Activated T-helper 2 cell treated with anti-CD3 and anti-CD28 coated beads, Interferon-gamma antibody, Interleukin-2, Interleukin-4, amounts not matched to agents 10 μg/mL and 5 μg/mL and 100 μg/mL, durations not matched to agents 14 hours and 24 hours and 36 hours (primary cell): ENCODE measurements at regions of chr4 and their contacts with region 1.

Region 1: GRCh38 chr4:168917138-168917779 is 92.8 kb downstream of the CBR4 start:
- DNase-seq: no peak
- H3K4me3 Mint-ChIP-seq: no peak overlapping the region
- H3K27ac Mint-ChIP-seq: no peak overlapping the region
- H3K4me1 Mint-ChIP-seq: no peaks in the 10 kb centered on the region
- H3K27me3 Mint-ChIP-seq: no peaks in the 10 kb centered on the region

Region 2: DNA sequence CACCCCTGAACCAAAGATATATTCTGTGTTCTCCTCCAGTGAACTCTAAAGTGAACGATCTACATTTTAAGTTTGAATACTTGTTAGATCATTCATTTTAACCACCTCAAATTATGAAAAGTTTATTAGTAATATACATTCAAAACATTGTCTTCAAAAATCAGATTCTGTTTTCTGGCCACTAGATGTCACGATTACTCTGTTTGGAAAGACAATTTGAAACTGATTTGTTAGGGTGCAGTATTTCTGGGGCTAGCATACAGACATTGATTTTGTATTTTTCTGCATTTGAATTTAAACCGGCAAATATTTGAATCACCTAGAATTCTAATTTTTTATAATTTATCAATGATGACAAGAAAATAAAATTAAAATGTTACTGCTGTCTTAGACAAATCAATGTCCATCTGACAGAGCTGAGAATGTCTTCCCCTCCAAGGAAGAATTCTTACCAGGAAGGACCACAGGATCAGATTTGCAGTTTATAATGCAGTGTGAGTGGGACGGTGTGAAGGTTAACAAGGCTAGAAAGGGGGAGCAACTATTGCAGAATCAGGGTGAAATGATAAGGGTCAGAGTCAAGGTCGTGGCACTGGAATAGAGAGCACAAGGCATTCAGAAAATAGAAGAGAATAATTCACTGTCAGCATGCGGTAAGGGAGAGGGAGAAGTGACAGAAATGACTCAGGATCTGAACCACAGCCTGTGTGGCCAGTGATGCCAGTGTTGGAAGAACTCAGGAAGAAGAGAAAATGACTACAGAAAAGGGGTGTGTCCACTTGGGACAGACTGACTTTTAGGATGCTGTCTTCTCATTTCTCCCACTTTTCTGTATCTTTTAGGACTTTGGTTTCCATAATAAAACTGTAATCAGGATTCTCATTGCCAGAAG is 733.3 kb before region 1 on chr4:
- intact Hi-C with region 1: loop called (anchors 2 kb)
- DNase-seq: no peak
- H3K4me3 Mint-ChIP-seq: no peak overlapping the region
- H3K27ac Mint-ChIP-seq: no peak overlapping the region
- H3K4me1 Mint-ChIP-seq: peaks cover 4% of the 10 kb centered on the region
- H3K27me3 Mint-ChIP-seq: peaks cover 4% of the 10 kb centered on the region

Region 3: DNA sequence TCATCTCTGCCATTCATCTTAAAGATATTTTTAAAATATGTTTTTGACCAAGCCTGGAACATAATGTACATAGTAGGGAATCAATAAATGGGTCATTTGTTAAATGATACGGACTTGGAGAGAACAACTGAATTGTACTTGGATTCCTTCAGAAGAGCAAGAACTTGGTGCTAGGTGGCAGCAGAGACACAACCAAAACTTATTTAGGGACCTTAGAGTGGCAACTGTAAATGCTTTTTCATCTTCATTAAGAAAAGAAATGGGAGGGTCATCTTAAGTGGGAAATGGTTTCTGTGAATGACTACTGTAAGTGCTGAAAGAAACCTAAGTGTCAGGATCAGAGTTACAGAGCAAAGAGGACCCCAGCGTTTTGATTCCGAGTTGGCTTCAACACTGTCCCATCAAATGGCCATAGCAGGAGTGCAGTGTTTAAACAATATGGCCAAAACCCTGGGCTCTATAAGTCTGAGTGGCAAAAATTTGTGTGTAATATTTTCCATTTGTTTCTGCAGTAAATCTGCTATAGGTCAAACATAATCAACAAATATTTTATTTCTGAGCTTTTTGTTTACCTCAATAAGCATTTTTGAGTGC is 206.8 kb before region 1 on chr4:
- intact Hi-C with region 1: loop called (anchors 1 kb)
- DNase-seq: no peak
- H3K4me3 Mint-ChIP-seq: no peak overlapping the region
- H3K27ac Mint-ChIP-seq: no peak overlapping the region
- H3K4me1 Mint-ChIP-seq: peaks cover 10% of the 10 kb centered on the region
- H3K27me3 Mint-ChIP-seq: peaks cover 4% of the 10 kb centered on the region